ENCODE measurements at regions of chr11 and their contacts with region 1.

Region 1: GRCh38 chr11:13238879-13239514 is 38.6 kb upstream of the BMAL1 start:
- DNase-seq: peak; percentile 21
- H3K4me3 Mint-ChIP-seq: no peak overlapping the region
- H3K27ac Mint-ChIP-seq: no peak overlapping the region
- H3K4me1 Mint-ChIP-seq: no peaks in the 10 kb centered on the region
- H3K27me3 Mint-ChIP-seq: peaks cover 23% of the 10 kb centered on the region

Region 2: DNA sequence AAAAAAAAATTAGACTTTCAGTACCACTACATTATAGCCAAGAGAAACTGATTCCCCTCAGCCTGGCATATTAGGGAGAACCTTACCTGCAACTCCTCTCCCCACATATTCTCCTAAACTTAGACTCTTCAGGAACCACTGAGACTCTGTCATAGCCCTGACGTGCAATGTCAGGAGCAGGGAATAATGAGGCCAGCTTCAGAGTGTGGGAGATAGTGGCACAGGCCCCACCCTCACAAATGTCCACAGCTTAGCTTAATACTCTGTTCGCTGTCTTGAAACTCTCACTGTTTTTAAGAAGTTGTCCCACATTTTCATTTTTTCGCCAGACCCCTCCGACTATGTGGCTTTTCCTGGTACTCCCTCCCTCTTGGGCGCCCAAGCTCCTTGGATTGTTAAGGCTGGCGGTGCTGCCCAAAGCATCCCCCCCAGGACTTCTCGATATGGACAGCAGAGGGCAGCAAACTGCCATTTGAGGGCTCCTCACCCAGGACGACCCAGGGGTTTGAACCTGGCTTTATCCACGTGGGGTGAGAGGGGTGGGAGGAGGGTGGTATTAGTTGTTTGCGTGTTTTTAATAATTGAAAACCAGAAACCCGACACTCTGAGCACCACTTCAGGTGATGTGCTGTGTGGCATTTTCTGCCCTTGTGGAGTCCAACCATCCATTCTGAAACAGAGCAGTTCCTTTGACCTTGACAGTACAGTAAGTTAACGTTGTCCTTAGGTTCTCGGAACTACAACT is 275.0 kb before region 1 on chr11:
- intact Hi-C with region 1: loop called (anchors 1 kb)
- DNase-seq: peak; percentile 21
- H3K4me3 Mint-ChIP-seq: no peak overlapping the region
- H3K27ac Mint-ChIP-seq: no peak overlapping the region
- H3K4me1 Mint-ChIP-seq: no peaks in the 10 kb centered on the region
- H3K27me3 Mint-ChIP-seq: peaks cover 15% of the 10 kb centered on the region

Region 3: GRCh38 chr11:13016415-13016814 is 222.6 kb before region 1 on chr11:
- intact Hi-C with region 1: loop called (anchors 1 kb)
- DNase-seq: no peak
- H3K4me3 Mint-ChIP-seq: no peak overlapping the region
- H3K27ac Mint-ChIP-seq: no peak overlapping the region
- H3K4me1 Mint-ChIP-seq: no peaks in the 10 kb centered on the region
- H3K27me3 Mint-ChIP-seq: peaks cover 37% of the 10 kb centered on the region

Region 4: GRCh38 chr11:13091373-13091772 is 147.6 kb before region 1 on chr11:
- intact Hi-C with region 1: no loop called
- DNase-seq: no peak
- H3K4me3 Mint-ChIP-seq: no peak overlapping the region
- H3K27ac Mint-ChIP-seq: no peak overlapping the region
- H3K4me1 Mint-ChIP-seq: no peaks in the 10 kb centered on the region
- H3K27me3 Mint-ChIP-seq: peaks cover 14% of the 10 kb centered on the region

Region 5: GRCh38 chr11:13276832-13277767 is 38.1 kb after region 1 on chr11:
- intact Hi-C with region 1: loop called (anchors 2 kb)
- DNase-seq: peak; percentile 98
- H3K4me3 Mint-ChIP-seq: peak overlapping the region; percentile 98
- H3K27ac Mint-ChIP-seq: peak overlapping the region; percentile 80
- H3K4me1 Mint-ChIP-seq: peaks cover 52% of the 10 kb centered on the region
- H3K27me3 Mint-ChIP-seq: peaks cover 46% of the 10 kb centered on the region

Region 6: GRCh38 chr11:13343931-13344717 is 105.1 kb after region 1 on chr11:
- intact Hi-C with region 1: loop called (anchors 1 kb)
- DNase-seq: peak; percentile 53
- H3K4me3 Mint-ChIP-seq: no peak overlapping the region
- H3K27ac Mint-ChIP-seq: peak overlapping the region; percentile 29
- H3K4me1 Mint-ChIP-seq: peaks cover 41% of the 10 kb centered on the region
- H3K27me3 Mint-ChIP-seq: no peaks in the 10 kb centered on the region

Measured in activated T-helper 1 cell treated with anti-CD3 and anti-CD28 coated beads, Interleukin-12 subunit alpha, Interleukin-12 subunit beta, Interleukin-2, Interleukin-4 antibody, amounts not matched to agents 30 ng/mL and 10 ng/mL and 1 ng/mL, durations not matched to agents 14 hours and 24 hours and 36 hours (primary cell).